SK-N-SH (cell line): ENCODE measurements at regions of chr4 and their contacts with region 1.

Region 1: GRCh38 chr4:8819473-8820177 is 52.0 kb downstream of the HMX1 start:
- DNase-seq: peak; percentile 37
- H3K4me3 ChIP-seq: no peak overlapping the region
- H3K27ac ChIP-seq: no peak overlapping the region; a peak in 1 of 4 replicates
- H3K4me1 ChIP-seq: peaks cover 0 to 20% of the 10 kb centered on the region in 2 experiments; a peak in 1 of 4 replicates
- H3K27me3 ChIP-seq: no peaks in the 10 kb centered on the region
- CTCF ChIP-seq: no peak
- EP300 ChIP-seq: no peak
- RAD21 ChIP-seq: no peak

Region 2: GRCh38 chr4:8795774-8796495 is 23.7 kb before region 1 on chr4:
- CTCF ChIA-PET with region 1: interaction called, 17 read pairs
- POLR2A ChIA-PET with region 1: interaction called, 3 read pairs
- DNase-seq: no peak
- H3K4me3 ChIP-seq: no peak overlapping the region
- H3K27ac ChIP-seq: no peak overlapping the region
- H3K4me1 ChIP-seq: peaks cover 0 to 29% of the 10 kb centered on the region in 2 experiments; a peak in 1 of 4 replicates
- H3K27me3 ChIP-seq: no peaks in the 10 kb centered on the region
- CTCF ChIP-seq: no peak
- EP300 ChIP-seq: no peak
- RAD21 ChIP-seq: no peak

Region 3: DNA sequence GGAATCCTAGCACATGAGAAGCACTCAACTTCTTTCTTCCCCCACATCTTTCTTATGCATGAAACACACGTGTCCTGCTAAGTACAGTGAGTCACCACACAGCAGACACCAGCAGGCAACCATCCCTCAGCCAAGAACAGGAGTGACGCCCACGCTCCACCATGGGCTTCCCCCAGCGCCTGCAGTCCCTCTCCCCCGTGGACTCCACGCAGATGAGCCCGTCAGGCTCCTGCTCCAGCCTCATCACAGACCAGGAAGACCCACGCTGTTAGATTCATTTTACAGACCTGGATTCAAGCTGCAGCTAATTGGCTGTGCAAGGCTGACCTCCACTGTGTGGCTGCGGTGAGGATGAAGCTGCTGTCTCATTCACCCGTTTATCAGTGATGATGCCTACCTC is 35.3 kb after region 1 on chr4:
- CTCF ChIA-PET with region 1: no interaction called
- POLR2A ChIA-PET with region 1: no interaction called
- DNase-seq: no peak
- H3K4me3 ChIP-seq: no peak overlapping the region
- H3K27ac ChIP-seq: no peak overlapping the region
- H3K4me1 ChIP-seq: peaks cover 0 to 4% of the 10 kb centered on the region in 2 experiments; a peak in 1 of 4 replicates
- H3K27me3 ChIP-seq: no peaks in the 10 kb centered on the region
- CTCF ChIP-seq: no peak
- EP300 ChIP-seq: no peak
- RAD21 ChIP-seq: no peak

Region 4: DNA sequence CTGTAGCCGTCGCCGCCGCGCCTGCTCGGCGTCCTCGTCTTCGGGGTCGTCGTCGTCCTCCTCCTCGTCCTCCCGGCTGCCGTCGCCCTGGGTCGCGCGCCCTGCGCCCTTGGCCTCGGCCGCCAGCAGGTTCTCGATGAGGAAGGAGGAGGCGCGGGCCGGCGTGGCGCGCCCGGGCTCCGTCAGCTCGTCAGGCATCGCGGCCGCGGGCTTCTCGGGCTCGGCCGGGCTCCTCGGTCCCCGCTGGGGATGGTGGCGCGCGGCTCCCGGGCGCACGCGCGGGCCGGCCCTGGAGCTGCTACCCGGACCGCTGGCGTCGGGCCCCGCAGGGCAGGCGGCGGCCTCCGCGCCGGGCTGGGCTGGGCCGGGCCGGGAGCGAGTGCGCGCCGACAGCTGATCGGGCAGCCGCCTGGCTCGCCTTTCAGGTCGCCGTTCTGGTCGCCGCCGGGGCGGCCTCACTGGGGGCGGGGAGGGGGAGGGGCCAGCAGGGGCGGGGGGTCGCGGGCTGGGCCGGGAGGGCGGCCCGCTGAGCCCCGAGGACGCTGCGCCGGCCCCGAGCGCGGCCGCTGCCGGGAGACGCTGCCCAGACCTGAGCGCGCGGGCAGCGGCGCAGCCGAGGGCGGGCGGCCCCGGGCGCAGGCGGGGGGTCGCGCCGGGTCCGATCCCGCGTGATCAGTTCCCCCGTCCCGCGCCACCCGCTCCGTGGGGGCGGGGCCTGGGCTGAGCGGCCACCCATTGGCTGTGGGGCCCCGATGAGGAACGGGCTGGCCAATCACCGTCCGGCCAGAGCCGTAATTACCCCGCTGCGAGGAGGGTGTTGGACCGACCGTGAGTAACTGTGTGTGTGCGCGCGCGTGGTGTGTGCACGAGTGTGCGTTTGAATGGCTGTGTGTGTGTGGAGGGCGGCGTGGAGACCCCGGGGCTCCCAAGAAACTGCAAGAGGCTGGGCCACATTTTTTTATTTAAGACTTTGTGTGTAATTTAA is 52.1 kb after region 1 on chr4 and contains the start of gene HMX1:
- CTCF ChIA-PET with region 1: no interaction called
- POLR2A ChIA-PET with region 1: no interaction called
- DNase-seq: peak; percentile 100
- H3K4me3 ChIP-seq: peak within 1 kb of the TSS in 1 of 2 experiments; percentile 55; a peak in 2 of 4 replicates
- H3K27ac ChIP-seq: peak within 1 kb of the TSS in 1 of 2 experiments; percentile 68; a peak in 2 of 4 replicates
- H3K4me1 ChIP-seq: peaks cover 0 to 19% of the 10 kb centered on the region in 2 experiments; a peak in 1 of 4 replicates
- H3K27me3 ChIP-seq: no peaks in the 10 kb centered on the region
- CTCF ChIP-seq: no peak
- EP300 ChIP-seq: no peak
- RAD21 ChIP-seq: no peak
- polyA plus RNA-seq, gene HMX1: 0.11 and 0.20 TPM in 2 replicates